Cardiac septum (tissue), 1 donor: ENCODE measurements at regions of chr4 and their contacts with region 1.

Region 1: DNA sequence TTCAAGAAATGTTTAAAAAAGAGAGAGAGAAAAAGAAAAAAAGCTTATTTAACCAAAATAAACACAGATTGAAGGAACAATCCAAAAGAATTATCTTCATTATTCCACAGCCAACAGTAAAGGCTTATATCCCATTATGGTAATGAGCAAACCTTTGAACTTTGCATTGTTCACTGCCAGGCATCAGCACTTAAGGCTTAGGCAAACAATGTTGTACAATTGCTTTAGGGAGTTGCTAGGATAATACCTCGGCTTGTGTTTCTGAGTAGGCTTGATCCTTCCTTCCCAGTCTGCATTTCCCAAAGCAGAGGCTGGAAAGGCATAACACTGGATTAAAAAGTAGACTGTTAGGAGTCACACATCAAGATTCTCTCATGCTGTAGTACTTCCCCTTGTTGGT is 352.7 kb upstream of the IGFBP7 start:
- DNase-seq: no peak

Region 2: GRCh38 chr4:57378766-57379165 is 84.1 kb before region 1 on chr4:
- intact Hi-C with region 1: no loop called
- DNase-seq: no peak

Region 3: DNA sequence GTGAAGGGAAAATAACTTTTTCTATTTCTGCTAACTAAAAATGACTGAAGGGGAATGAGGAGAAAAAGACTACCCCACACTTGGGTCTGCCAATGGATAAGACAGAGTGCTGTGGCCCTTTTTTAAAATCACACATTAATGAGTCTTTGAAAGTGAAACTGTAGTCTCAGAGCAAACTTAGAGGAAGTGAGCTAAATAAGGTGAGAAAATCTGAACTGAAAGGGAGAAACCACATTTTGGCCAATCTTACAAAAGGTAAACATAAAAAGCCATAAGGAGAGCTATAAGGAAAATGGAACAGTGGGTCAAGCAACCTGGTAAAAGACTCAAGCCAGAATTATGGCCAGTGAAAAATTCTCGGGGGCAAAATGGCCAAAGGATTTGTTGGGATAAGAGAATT is 402.4 kb after region 1 on chr4:
- intact Hi-C with region 1: loop called (anchors 10 kb)
- DNase-seq: no peak